Cardiac septum (tissue), 1 donor: ENCODE measurements at regions of chr6 and their contacts with region 1.

Region 1: DNA sequence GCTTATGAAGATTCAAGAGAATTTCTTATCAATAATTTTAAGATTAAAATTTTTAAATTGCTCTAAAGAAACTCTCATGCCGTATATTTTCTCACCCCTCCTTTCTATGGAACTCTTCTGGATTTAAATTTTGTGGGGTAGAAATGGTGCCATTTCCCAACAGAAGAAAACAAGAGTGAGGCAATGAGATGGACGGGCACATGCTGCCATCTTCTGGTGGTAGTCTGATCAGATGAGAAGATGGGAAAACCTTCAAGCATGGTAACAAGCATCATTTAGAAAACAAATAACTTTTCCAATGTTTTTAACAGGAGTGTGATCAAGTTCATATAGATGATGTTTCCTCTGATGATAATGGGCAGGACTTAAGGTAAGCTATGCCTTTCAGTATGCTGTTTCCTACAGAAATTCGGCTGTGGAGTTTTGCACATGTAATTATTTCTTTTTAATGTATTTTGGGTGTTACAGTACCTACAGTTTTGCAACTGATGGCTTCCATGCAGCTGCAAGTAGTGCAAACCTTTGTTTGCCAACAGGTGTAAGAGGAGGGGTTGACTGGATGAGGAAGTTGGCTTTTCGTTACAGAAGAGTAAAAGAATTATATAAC is 271.4 kb downstream of the EYA4 start:
- DNase-seq: no peak

Region 2: GRCh38 chr6:132820629-132821381 is 691.7 kb before region 1 on chr6:
- intact Hi-C with region 1: loop called (anchors 10 kb)
- DNase-seq: no peak

Region 3: GRCh38 chr6:132962936-132963868 is 549.3 kb before region 1 on chr6:
- intact Hi-C with region 1: loop called (anchors 2 kb)
- DNase-seq: no peak

Region 4: GRCh38 chr6:133184798-133185372 is 327.6 kb before region 1 on chr6:
- intact Hi-C with region 1: loop called (anchors 5 kb)
- DNase-seq: no peak